Activated CD8-positive, alpha-beta T cell treated with anti-CD3 and anti-CD28 coated beads for 36 hours (primary cell): ENCODE measurements at regions of chr7 and their contacts with region 1.

Region 1: DNA sequence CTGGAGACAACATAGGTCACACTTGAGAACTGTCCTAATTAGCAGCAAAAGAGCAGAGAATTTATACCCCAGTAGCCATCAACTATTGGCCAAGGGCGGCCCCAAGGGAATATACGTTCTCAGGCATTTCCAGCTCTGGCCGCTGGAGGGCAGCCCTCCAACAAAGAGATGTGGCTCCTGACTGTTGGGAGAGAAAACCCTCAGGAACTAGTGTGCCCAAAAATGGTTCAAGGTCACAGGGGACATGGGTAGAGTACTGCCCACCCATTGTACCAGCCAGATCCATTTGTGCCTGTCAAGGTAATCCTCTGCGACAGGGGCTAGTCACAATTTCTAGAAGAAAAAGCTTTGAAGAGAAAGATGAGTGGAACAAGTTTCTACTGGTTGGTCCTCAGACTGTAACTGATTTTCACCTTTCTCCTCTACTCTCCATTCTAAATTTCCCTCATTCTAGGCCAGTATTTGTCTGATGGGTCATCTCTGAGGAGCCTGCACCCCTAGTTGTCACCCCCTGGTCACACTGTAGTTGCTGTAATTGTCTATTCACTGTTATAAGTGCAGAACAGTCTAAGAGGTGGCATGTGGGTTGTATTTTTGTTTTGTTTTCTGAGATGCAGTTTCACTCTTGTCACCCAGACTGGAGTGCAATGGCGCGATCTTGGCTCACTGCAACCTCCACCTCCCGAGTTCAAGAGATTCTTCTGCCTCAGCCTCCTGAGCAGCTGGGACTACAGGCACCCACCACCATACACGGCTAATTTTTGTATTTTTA is 14.7 kb upstream of the C7orf33 start:
- DNase-seq: peak; percentile 85
- ATAC-seq: peak; percentile 97
- H3K4me3 Mint-ChIP-seq: no peak overlapping the region
- H3K27ac Mint-ChIP-seq: no peak overlapping the region
- H3K4me1 Mint-ChIP-seq: peaks cover 11% of the 10 kb centered on the region
- H3K27me3 Mint-ChIP-seq: peaks cover 11% of the 10 kb centered on the region
- CTCF ChIP-seq: peak; percentile 89

Region 2: GRCh38 chr7:148556924-148557323 is 18.9 kb before region 1 on chr7:
- CTCF ChIA-PET with region 1: interaction called, 21 read pairs
- POLR2A ChIA-PET with region 1: no interaction called
- intact Hi-C with region 1: no loop called
- DNase-seq: no peak
- ATAC-seq: no peak
- H3K4me3 Mint-ChIP-seq: no peak overlapping the region
- H3K27ac Mint-ChIP-seq: no peak overlapping the region
- H3K4me1 Mint-ChIP-seq: peaks cover 8% of the 10 kb centered on the region
- H3K27me3 Mint-ChIP-seq: peaks cover 17% of the 10 kb centered on the region
- CTCF ChIP-seq: no peak

Region 3: DNA sequence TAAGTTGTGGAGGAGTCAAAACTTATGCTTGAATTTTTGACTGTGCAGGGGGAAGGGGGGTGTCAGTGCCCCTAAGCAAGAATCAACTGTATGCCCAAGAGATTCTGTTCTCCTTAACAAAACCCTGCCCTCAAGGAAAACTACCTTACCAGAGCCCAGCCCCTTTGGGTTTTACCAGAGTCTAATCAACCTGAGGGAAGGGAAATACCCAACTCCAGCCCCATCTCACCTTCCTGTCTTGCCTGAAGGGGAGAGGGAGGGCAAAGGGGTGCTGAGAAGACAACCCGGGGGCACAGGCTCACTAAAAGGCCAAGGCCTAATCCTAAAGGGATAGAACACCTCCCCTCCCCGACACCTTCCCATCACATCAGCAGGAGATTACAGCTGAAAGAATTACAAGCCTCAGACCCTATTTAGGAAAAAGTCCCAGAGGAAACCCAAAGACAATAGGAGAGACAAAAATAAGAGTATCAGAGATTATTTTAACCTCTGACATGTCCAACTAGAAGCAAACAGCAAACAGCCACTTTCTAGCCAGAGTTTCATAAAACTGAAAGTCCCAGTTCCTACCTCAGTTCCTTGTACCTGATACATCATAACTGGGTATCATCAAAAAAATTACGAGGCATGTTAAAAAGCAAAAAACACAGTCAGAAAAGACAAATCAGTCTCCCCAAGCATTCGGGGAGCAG is 12.1 kb before region 1 on chr7:
- CTCF ChIA-PET with region 1: interaction called, 41 read pairs
- POLR2A ChIA-PET with region 1: no interaction called
- intact Hi-C with region 1: no loop called
- DNase-seq: no peak
- ATAC-seq: peak; percentile 45
- H3K4me3 Mint-ChIP-seq: peak overlapping the region; percentile 45
- H3K27ac Mint-ChIP-seq: peak overlapping the region; percentile 80
- H3K4me1 Mint-ChIP-seq: peaks cover 21% of the 10 kb centered on the region
- H3K27me3 Mint-ChIP-seq: peaks cover 10% of the 10 kb centered on the region
- CTCF ChIP-seq: no peak

Region 4: GRCh38 chr7:148698397-148699023 is 122.7 kb after region 1 on chr7 and contains the start of gene CUL1:
- CTCF ChIA-PET with region 1: interaction called, 8 read pairs
- POLR2A ChIA-PET with region 1: interaction called, 8 read pairs
- intact Hi-C with region 1: loop called (anchors 5 kb)
- DNase-seq: peak; percentile 81
- ATAC-seq: peak; percentile 70
- H3K4me3 Mint-ChIP-seq: peak within 1 kb of the TSS; percentile 84
- H3K27ac Mint-ChIP-seq: peak within 1 kb of the TSS; percentile 95
- H3K4me1 Mint-ChIP-seq: peaks cover 50% of the 10 kb centered on the region
- H3K27me3 Mint-ChIP-seq: no peaks in the 10 kb centered on the region
- CTCF ChIP-seq: no peak
- total RNA-seq, gene CUL1: 60.6 to 61.2 TPM

Region 5: DNA sequence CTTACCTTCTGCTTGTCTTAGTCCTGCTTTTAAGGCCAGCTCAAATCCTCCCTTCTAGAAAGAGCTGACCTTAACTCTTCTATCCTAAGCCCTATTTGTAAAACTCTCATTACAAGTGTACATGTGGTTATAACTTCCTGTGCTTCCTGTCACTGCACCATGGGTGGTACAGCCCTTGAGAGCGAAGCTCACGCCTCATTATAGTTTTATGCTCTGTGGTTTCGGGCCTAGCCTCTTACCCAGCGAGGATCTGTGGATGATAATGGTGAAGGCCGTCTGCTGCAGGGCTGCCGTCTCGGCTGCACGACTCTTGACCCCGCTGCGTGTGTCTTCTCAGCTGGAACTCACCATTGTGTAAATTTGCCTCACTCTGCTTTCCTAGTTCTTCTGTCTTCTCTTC is 197.5 kb after region 1 on chr7:
- CTCF ChIA-PET with region 1: interaction called, 8 read pairs
- POLR2A ChIA-PET with region 1: no interaction called
- intact Hi-C with region 1: loop called (anchors 10 kb)
- DNase-seq: peak; percentile 60
- ATAC-seq: peak; percentile 83
- H3K4me3 Mint-ChIP-seq: no peak overlapping the region
- H3K27ac Mint-ChIP-seq: peak overlapping the region; percentile 90
- H3K4me1 Mint-ChIP-seq: peaks cover 19% of the 10 kb centered on the region
- H3K27me3 Mint-ChIP-seq: no peaks in the 10 kb centered on the region
- CTCF ChIP-seq: no peak